ENCODE measurements at regions of chr18 and their contacts with region 1.

Region 1: GRCh38 chr18:11040823-11041656 is 108.3 kb downstream of the PIEZO2 start:
- DNase-seq: peak; percentile 69
- ATAC-seq: peak; percentile 68
- H3K4me3 ChIP-seq: no peak overlapping the region
- H3K27ac ChIP-seq: peak overlapping the region; percentile 50; the same call in 1 of the 2 replicates
- H3K4me1 ChIP-seq: peaks cover 11% of the 10 kb centered on the region
- H3K27me3 ChIP-seq: no peaks in the 10 kb centered on the region
- CTCF ChIP-seq: peak; percentile 69
- POLR2A ChIP-seq: no peak
- RAD21 ChIP-seq: peak; percentile 65

Region 2: GRCh38 chr18:10739152-10739551 is 301.9 kb before region 1 on chr18:
- CTCF ChIA-PET with region 1: no interaction called
- POLR2A ChIA-PET with region 1: no interaction called
- dilution Hi-C with region 1: no loop called
- in situ Hi-C with region 1: no loop called
- intact Hi-C with region 1: no loop called
- DNase-seq: peak; percentile 6
- ATAC-seq: no peak
- H3K4me3 ChIP-seq: no peak overlapping the region
- H3K27ac ChIP-seq: no peak overlapping the region
- H3K4me1 ChIP-seq: no peaks in the 10 kb centered on the region
- H3K27me3 ChIP-seq: no peaks in the 10 kb centered on the region
- CTCF ChIP-seq: no peak
- POLR2A ChIP-seq: no peak
- RAD21 ChIP-seq: no peak

Region 3: GRCh38 chr18:10787293-10787901 is 253.6 kb before region 1 on chr18:
- CTCF ChIA-PET with region 1: no interaction called
- POLR2A ChIA-PET with region 1: no interaction called
- dilution Hi-C with region 1: no loop called
- in situ Hi-C with region 1: no loop called
- intact Hi-C with region 1: loop called (anchors 5 kb)
- DNase-seq: peak; percentile 80
- ATAC-seq: peak; percentile 79
- H3K4me3 ChIP-seq: no peak overlapping the region
- H3K27ac ChIP-seq: no peak overlapping the region
- H3K4me1 ChIP-seq: peaks cover 3% of the 10 kb centered on the region
- H3K27me3 ChIP-seq: no peaks in the 10 kb centered on the region
- CTCF ChIP-seq: peak; percentile 84
- POLR2A ChIP-seq: no peak
- RAD21 ChIP-seq: peak; percentile 75

Region 4: GRCh38 chr18:10928772-10929373 is 112.2 kb before region 1 on chr18:
- CTCF ChIA-PET with region 1: interaction called, 3 read pairs
- POLR2A ChIA-PET with region 1: no interaction called
- dilution Hi-C with region 1: no loop called
- in situ Hi-C with region 1: no loop called
- intact Hi-C with region 1: loop called (anchors 5 kb)
- DNase-seq: peak; percentile 97
- ATAC-seq: peak; percentile 33; the same call in 1 of the 2 replicates
- H3K4me3 ChIP-seq: no peak overlapping the region
- H3K27ac ChIP-seq: peak overlapping the region; percentile 95; the same call in 1 of the 2 replicates
- H3K4me1 ChIP-seq: peaks cover 21% of the 10 kb centered on the region
- H3K27me3 ChIP-seq: no peaks in the 10 kb centered on the region
- CTCF ChIP-seq: no peak
- POLR2A ChIP-seq: no peak
- RAD21 ChIP-seq: no peak

Region 5: GRCh38 chr18:11071300-11071699 is 30.3 kb after region 1 on chr18:
- CTCF ChIA-PET with region 1: no interaction called
- POLR2A ChIA-PET with region 1: no interaction called
- dilution Hi-C with region 1: no loop called
- in situ Hi-C with region 1: no loop called
- intact Hi-C with region 1: no loop called
- DNase-seq: no peak
- ATAC-seq: no peak
- H3K4me3 ChIP-seq: no peak overlapping the region
- H3K27ac ChIP-seq: no peak overlapping the region
- H3K4me1 ChIP-seq: peaks cover 2% of the 10 kb centered on the region; the same call in 1 of the 2 replicates
- H3K27me3 ChIP-seq: no peaks in the 10 kb centered on the region
- CTCF ChIP-seq: no peak
- POLR2A ChIP-seq: no peak
- RAD21 ChIP-seq: no peak

Region 6: GRCh38 chr18:11104307-11104706 is 63.3 kb after region 1 on chr18:
- CTCF ChIA-PET with region 1: no interaction called
- POLR2A ChIA-PET with region 1: no interaction called
- dilution Hi-C with region 1: no loop called
- in situ Hi-C with region 1: no loop called
- intact Hi-C with region 1: no loop called
- DNase-seq: no peak
- ATAC-seq: no peak
- H3K4me3 ChIP-seq: no peak overlapping the region
- H3K27ac ChIP-seq: no peak overlapping the region
- H3K4me1 ChIP-seq: peaks cover 10% of the 10 kb centered on the region; the same call in 1 of the 2 replicates
- H3K27me3 ChIP-seq: peaks cover 6% of the 10 kb centered on the region; the same call in 1 of the 2 replicates
- CTCF ChIP-seq: no peak
- POLR2A ChIP-seq: no peak
- RAD21 ChIP-seq: no peak

Region 7: DNA sequence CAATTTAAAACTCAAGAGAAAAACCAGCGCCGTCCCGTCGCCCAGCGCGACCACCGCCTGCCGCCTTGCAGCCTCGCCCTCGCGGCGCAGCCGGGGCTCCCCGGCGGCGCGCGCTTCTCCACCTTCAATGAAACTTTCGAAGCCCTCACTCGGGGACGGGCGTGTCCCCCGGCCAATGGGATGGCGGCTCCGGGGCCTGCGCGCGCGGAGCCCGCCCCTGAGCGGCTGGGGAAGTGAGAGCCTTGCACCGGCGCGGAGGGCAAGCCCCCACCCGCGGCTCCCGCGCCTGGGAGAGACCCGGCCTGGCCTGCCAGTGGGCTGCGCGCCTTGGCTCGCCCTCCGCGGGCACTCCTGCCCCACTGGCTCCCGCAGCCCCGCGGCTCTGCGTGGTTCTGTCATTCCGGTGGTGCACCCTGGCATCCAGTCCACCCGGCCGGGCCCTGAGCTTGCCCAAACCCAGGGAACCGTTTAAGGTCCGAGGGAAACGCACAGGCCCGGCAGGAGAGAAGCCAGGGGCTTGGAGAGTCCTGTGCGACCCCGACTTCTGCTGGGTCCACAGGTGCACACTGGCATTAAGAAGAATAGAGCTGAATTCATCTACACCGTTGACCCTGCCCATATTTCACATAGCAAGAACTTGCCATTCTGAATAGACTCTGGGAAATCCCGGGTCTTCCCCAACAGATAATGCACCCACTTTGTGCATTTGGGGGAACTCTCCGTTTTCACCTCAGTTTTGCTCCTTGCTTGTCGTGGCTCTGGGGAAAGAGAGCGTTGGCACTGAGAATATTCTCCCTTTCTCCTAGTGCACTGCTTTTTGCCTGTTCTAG is 108.6 kb after region 1 on chr18 and contains the start of gene PIEZO2:
- CTCF ChIA-PET with region 1: interaction called, 5 read pairs
- POLR2A ChIA-PET with region 1: no interaction called
- dilution Hi-C with region 1: no loop called
- in situ Hi-C with region 1: no loop called
- intact Hi-C with region 1: loop called (anchors 2 kb)
- DNase-seq: peak; percentile 65
- ATAC-seq: peak; percentile 98
- H3K4me3 ChIP-seq: peak within 1 kb of the TSS; percentile 69
- H3K27ac ChIP-seq: peak within 1 kb of the TSS; percentile 36; the same call in 1 of the 2 replicates
- H3K4me1 ChIP-seq: peaks cover 5% of the 10 kb centered on the region; the same call in 1 of the 2 replicates
- H3K27me3 ChIP-seq: peaks cover 12% of the 10 kb centered on the region
- CTCF ChIP-seq: no peak
- POLR2A ChIP-seq: no peak
- RAD21 ChIP-seq: no peak
- total RNA-seq, gene PIEZO2: 3.3 and 4.1 TPM in 2 replicates

Region 8: GRCh38 chr18:11553098-11553940 is 512.3 kb after region 1 on chr18:
- CTCF ChIA-PET with region 1: interaction called, 3 read pairs
- POLR2A ChIA-PET with region 1: no interaction called
- dilution Hi-C with region 1: no loop called
- in situ Hi-C with region 1: no loop called
- intact Hi-C with region 1: loop called (anchors 2 kb)
- DNase-seq: peak; percentile 59
- ATAC-seq: peak; percentile 99
- H3K4me3 ChIP-seq: no peak overlapping the region
- H3K27ac ChIP-seq: no peak overlapping the region
- H3K4me1 ChIP-seq: no peaks in the 10 kb centered on the region
- H3K27me3 ChIP-seq: peaks cover 9% of the 10 kb centered on the region
- CTCF ChIP-seq: peak; percentile 86
- POLR2A ChIP-seq: no peak
- RAD21 ChIP-seq: peak; percentile 89